ENCODE measurements at regions of chr9 and their contacts with region 1.

Region 1: GRCh38 chr9:133532937-133533668 is 1.4 kb upstream of the ADAMTSL2 start:
- DNase-seq: peak; percentile 83
- H3K4me3 ChIP-seq: no peak overlapping the region
- H3K27ac ChIP-seq: peak overlapping the region in 2 of 4 donors; percentile 66 to 70
- H3K4me1 ChIP-seq: peaks cover 0 to 45% (median 37%) of the 10 kb centered on the region in 4 donors
- H3K27me3 ChIP-seq: no peaks in the 10 kb centered on the region
- CTCF ChIP-seq: peak; percentile 53 to 85 (median 73)
- EP300 ChIP-seq: no peak
- POLR2A ChIP-seq: no peak

Region 2: GRCh38 chr9:133589454-133590227 is 56.5 kb after region 1 on chr9:
- intact Hi-C with region 1: loop called (anchors 5 kb)
- DNase-seq: no peak
- H3K4me3 ChIP-seq: no peak overlapping the region
- H3K27ac ChIP-seq: no peak overlapping the region
- H3K4me1 ChIP-seq: peaks cover 0 to 19% (median 15%) of the 10 kb centered on the region in 4 donors
- H3K27me3 ChIP-seq: peaks cover 0 to 43% (median 7%) of the 10 kb centered on the region in 3 donors
- CTCF ChIP-seq: peak in 1 of 4 experiments; percentile 9
- EP300 ChIP-seq: no peak
- POLR2A ChIP-seq: no peak

Region 3: GRCh38 chr9:133602277-133602676 is 69.2 kb after region 1 on chr9:
- intact Hi-C with region 1: no loop called
- DNase-seq: no peak
- H3K4me3 ChIP-seq: no peak overlapping the region
- H3K27ac ChIP-seq: no peak overlapping the region
- H3K4me1 ChIP-seq: no peaks in the 10 kb centered on the region
- H3K27me3 ChIP-seq: peaks cover 0 to 50% (median 33%) of the 10 kb centered on the region in 3 donors
- CTCF ChIP-seq: no peak
- EP300 ChIP-seq: no peak
- POLR2A ChIP-seq: no peak

Region 4: DNA sequence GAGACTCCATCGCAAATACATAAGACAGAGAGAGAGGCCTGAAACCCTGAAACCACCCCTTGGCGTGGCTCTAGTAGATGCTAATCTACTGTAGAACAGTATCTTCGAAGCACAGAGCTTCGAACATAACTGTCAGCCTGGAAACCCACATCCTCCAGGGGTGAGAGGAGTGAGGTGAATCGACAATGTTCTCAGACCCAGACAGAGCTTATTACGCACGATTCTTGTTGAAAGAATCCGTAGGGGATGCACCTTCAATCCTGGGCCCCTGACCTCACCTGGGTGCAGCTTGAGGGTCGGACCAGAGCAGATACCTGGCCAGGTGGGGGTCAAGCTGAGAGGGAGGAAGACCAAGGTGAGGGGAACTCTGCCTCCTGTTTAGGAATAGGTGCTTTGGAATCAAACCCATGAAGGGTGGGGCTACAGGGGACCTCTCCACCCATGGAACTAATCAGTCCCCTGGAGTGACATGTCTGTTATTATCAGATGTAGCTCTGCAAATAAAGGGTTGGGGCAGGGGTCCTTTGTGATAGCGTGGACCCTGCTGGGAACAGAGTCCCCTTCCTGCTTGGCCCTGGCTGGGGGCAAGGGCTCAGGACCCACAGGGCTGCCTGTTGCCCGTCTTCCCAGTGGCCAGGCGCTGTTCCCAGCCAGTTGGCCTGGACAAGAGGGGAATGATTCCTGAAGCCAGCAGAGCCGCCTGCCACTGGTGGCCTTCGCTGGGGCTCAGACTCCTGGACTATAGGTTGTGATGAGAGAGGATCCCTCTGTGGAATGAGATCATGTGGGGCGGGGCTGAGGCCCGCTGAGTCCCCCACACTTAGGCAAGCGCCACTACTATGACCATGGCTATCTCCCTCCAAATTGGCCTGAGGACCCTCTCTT is 144.3 kb after region 1 on chr9:
- intact Hi-C with region 1: no loop called
- DNase-seq: no peak
- H3K4me3 ChIP-seq: no peak overlapping the region
- H3K27ac ChIP-seq: no peak overlapping the region
- H3K4me1 ChIP-seq: peaks cover 0 to 9% (median 0%) of the 10 kb centered on the region in 4 donors
- H3K27me3 ChIP-seq: no peaks in the 10 kb centered on the region
- CTCF ChIP-seq: no peak
- EP300 ChIP-seq: no peak
- POLR2A ChIP-seq: no peak

Region 5: GRCh38 chr9:133726401-133727276 is 193.5 kb after region 1 on chr9:
- intact Hi-C with region 1: loop called (anchors 1 kb)
- DNase-seq: peak; percentile 74
- H3K4me3 ChIP-seq: no peak overlapping the region
- H3K27ac ChIP-seq: no peak overlapping the region
- H3K4me1 ChIP-seq: no peaks in the 10 kb centered on the region
- H3K27me3 ChIP-seq: no peaks in the 10 kb centered on the region
- CTCF ChIP-seq: peak; percentile 24 to 43 (median 38)
- EP300 ChIP-seq: no peak
- POLR2A ChIP-seq: no peak